ENCODE measurements at regions of chr13 and their contacts with region 1.

Region 1: DNA sequence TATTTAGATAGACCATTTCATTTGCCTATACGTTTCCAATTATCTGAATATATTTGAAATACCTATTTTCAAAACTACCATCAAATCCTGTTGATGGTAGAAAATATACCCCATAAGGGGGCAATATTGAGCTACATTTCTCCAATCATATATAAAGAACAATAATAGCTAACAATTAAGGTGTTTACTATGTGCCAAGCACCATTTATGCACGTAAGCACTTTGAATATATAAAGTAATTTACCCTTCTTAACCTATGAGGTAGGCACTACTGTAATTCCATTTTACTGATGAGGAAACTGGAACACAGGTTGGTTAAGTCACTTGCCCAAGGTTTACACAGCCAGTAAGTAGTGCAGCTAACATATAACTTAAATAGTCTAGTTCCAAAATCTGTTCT is 79.2 kb downstream of the UBL3 start:
- DNase-seq: no peak
- ATAC-seq: peak; percentile 74
- H3K4me3 ChIP-seq: no peak overlapping the region
- H3K27ac ChIP-seq: no peak overlapping the region
- H3K4me1 ChIP-seq: no peaks in the 10 kb centered on the region
- H3K27me3 ChIP-seq: no peaks in the 10 kb centered on the region
- CTCF ChIP-seq: peak in 2 of 3 experiments; percentile 20 to 56; a peak in 4 of 6 replicates
- EP300 ChIP-seq: no peak
- POLR2A ChIP-seq: no peak
- RAD21 ChIP-seq: peak; percentile 68

Region 2: GRCh38 chr13:29713839-29714238 is 57.4 kb before region 1 on chr13:
- CTCF ChIA-PET with region 1: no interaction called
- POLR2A ChIA-PET with region 1: no interaction called
- RAD21 ChIA-PET with region 1: no interaction called
- SMC1A ChIA-PET with region 1: no interaction called
- in situ Hi-C with region 1: no loop called
- intact Hi-C with region 1: no loop called
- DNase-seq: no peak
- ATAC-seq: no peak
- H3K4me3 ChIP-seq: no peak overlapping the region
- H3K27ac ChIP-seq: no peak overlapping the region
- H3K4me1 ChIP-seq: no peaks in the 10 kb centered on the region
- H3K27me3 ChIP-seq: no peaks in the 10 kb centered on the region; a peak in 2 of 4 replicates
- CTCF ChIP-seq: peak; percentile 18 to 69 (median 54); a peak in 5 of 6 replicates
- EP300 ChIP-seq: no peak
- POLR2A ChIP-seq: no peak
- RAD21 ChIP-seq: peak; percentile 45

Region 3: DNA sequence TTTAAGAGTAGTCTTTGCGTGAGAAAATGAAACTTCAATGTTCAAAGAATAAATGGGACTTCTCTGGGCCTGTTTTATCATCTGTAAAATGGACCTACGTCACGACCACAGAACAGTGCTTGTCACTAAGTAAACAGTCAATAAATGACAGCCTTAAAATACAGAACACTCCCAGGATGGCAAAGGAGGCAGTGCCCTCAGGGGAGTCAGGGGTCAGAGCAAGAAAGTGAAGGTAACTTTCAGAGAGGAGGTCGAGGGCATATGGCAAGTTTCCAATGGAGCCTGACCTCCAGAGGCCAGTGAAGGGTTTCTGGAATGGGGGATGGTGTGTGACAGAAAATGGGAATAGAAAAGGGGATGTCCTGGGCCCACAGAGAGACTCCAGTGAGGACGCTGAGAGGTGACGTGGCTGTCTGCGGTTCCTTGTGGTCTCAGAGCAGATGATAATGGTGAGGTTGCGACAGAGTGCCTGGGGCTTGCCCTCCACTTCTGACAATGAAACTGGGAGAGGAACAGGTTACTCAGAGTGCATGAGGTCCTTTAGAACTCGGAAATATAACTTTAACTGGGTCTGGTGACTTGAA is 12.6 kb before region 1 on chr13:
- CTCF ChIA-PET with region 1: interaction called, 30 read pairs
- POLR2A ChIA-PET with region 1: no interaction called
- RAD21 ChIA-PET with region 1: interaction called, 11 read pairs
- SMC1A ChIA-PET with region 1: interaction called, 35 read pairs
- in situ Hi-C with region 1: no loop called
- intact Hi-C with region 1: no loop called
- DNase-seq: peak; percentile 74
- ATAC-seq: peak; percentile 96
- H3K4me3 ChIP-seq: no peak overlapping the region
- H3K27ac ChIP-seq: no peak overlapping the region
- H3K4me1 ChIP-seq: peaks cover 3% of the 10 kb centered on the region; the same call in 1 of the 2 replicates
- H3K27me3 ChIP-seq: no peaks in the 10 kb centered on the region
- CTCF ChIP-seq: no peak
- EP300 ChIP-seq: peak; percentile 67 to 76; a peak in 3 of 4 replicates
- POLR2A ChIP-seq: no peak
- RAD21 ChIP-seq: no peak

Region 4: DNA sequence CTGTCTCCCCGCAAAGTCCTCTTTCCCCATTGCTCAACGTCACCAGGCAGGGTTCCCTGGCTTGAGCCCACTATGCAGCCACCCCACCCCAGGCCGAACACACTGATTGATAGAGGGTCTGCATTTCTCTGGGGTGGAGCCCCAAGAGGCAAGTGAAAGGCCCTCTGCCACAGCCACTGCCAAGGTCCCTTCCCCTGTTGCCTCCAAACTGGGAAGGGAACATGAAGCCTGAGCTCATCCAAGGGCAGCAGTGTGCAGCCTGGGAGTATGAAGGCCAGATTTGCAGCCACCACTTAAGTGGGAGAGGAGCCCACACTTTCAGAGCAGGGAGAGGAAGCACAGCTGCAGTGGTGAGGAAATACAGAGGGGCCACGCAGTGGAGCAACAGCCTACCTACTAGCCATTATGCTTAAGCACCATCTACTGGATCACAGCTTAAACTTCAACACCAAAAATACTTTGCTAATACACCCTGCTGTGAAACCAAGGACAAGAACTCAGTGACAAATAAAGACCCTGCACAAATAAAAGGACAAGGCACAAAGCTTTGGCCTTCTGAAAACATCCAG is 30.6 kb after region 1 on chr13:
- CTCF ChIA-PET with region 1: interaction called, 28 read pairs
- POLR2A ChIA-PET with region 1: no interaction called
- RAD21 ChIA-PET with region 1: interaction called, 5 read pairs
- SMC1A ChIA-PET with region 1: interaction called, 7 read pairs
- in situ Hi-C with region 1: no loop called
- intact Hi-C with region 1: no loop called
- DNase-seq: no peak
- ATAC-seq: 0 out of 3 replicates have a peak, but pooled peaks have one; percentile 16
- H3K4me3 ChIP-seq: no peak overlapping the region
- H3K27ac ChIP-seq: no peak overlapping the region
- H3K4me1 ChIP-seq: peaks cover 3% of the 10 kb centered on the region; the same call in 1 of the 2 replicates
- H3K27me3 ChIP-seq: no peaks in the 10 kb centered on the region
- CTCF ChIP-seq: peak in 2 of 3 experiments; percentile 10 to 22; a peak in 2 of 6 replicates
- EP300 ChIP-seq: no peak
- POLR2A ChIP-seq: no peak
- RAD21 ChIP-seq: peak; percentile 61; the same call in 1 of the 2 replicates

Region 5: GRCh38 chr13:29817604-29818378 is 46.5 kb after region 1 on chr13:
- CTCF ChIA-PET with region 1: interaction called, 9 read pairs
- POLR2A ChIA-PET with region 1: no interaction called
- RAD21 ChIA-PET with region 1: interaction called, 24 read pairs
- SMC1A ChIA-PET with region 1: interaction called, 15 read pairs
- in situ Hi-C with region 1: no loop called
- intact Hi-C with region 1: no loop called
- DNase-seq: peak; percentile 69
- ATAC-seq: peak; percentile 97
- H3K4me3 ChIP-seq: peak overlapping the region; percentile 46; the same call in 1 of the 2 replicates
- H3K27ac ChIP-seq: peak overlapping the region; percentile 87
- H3K4me1 ChIP-seq: peaks cover 23% of the 10 kb centered on the region; the same call in 1 of the 2 replicates
- H3K27me3 ChIP-seq: no peaks in the 10 kb centered on the region
- CTCF ChIP-seq: no peak
- EP300 ChIP-seq: peak; percentile 38 to 54; a peak in 2 of 4 replicates
- POLR2A ChIP-seq: no peak
- RAD21 ChIP-seq: 0 out of 2 replicates have a peak, but pooled peaks have one; percentile 12

Region 6: GRCh38 chr13:29850224-29850898 is 79.1 kb after region 1 on chr13 and contains the start of gene UBL3:
- CTCF ChIA-PET with region 1: interaction called, 112 read pairs
- POLR2A ChIA-PET with region 1: interaction called, 3 read pairs
- RAD21 ChIA-PET with region 1: interaction called, 46 read pairs
- SMC1A ChIA-PET with region 1: interaction called, 155 read pairs
- in situ Hi-C with region 1: loop called (anchors 5 kb)
- intact Hi-C with region 1: loop called (anchors 2 kb)
- DNase-seq: peak; percentile 62
- ATAC-seq: peak; percentile 84
- H3K4me3 ChIP-seq: peak within 1 kb of the TSS; percentile 77
- H3K27ac ChIP-seq: peak within 1 kb of the TSS; percentile 54
- H3K4me1 ChIP-seq: no peaks in the 10 kb centered on the region
- H3K27me3 ChIP-seq: no peaks in the 10 kb centered on the region
- CTCF ChIP-seq: no peak
- EP300 ChIP-seq: no peak
- POLR2A ChIP-seq: peak; percentile 87
- RAD21 ChIP-seq: no peak
- polyA plus RNA-seq, gene UBL3: 5.5 to 6.1 TPM

Region 7: GRCh38 chr13:29935309-29935981 is 164.2 kb after region 1 on chr13:
- CTCF ChIA-PET with region 1: interaction called, 24 read pairs
- POLR2A ChIA-PET with region 1: no interaction called
- RAD21 ChIA-PET with region 1: interaction called, 21 read pairs
- SMC1A ChIA-PET with region 1: interaction called, 23 read pairs
- in situ Hi-C with region 1: no loop called
- intact Hi-C with region 1: loop called (anchors 5 kb)
- DNase-seq: peak; percentile 74
- ATAC-seq: peak; percentile 91
- H3K4me3 ChIP-seq: peak overlapping the region; percentile 50; the same call in 1 of the 2 replicates
- H3K27ac ChIP-seq: no peak overlapping the region
- H3K4me1 ChIP-seq: peaks cover 20% of the 10 kb centered on the region
- H3K27me3 ChIP-seq: no peaks in the 10 kb centered on the region
- CTCF ChIP-seq: no peak
- EP300 ChIP-seq: peak; percentile 74 to 75; a peak in 3 of 4 replicates
- POLR2A ChIP-seq: no peak
- RAD21 ChIP-seq: no peak

Region 8: DNA sequence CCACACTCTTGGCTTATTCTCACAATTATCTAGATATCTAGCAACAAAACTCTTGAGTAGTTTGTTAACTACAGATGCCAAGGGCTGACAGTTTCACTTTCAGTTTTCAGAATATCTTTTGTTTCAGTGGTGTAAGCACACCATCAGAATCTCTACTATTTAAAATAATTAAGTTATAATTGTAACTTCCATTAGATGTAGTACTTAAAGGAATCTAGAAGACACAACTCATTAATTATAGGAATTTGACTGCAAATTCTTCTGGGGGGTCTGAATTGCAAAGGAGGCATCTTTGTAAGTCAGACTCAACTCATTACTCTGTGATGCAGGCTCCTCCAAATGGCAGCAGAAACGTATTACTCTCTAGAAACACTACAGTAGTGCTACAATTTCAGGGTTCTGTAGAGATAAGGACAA is 801.6 kb after region 1 on chr13:
- CTCF ChIA-PET with region 1: no interaction called
- POLR2A ChIA-PET with region 1: no interaction called
- RAD21 ChIA-PET with region 1: no interaction called
- SMC1A ChIA-PET with region 1: no interaction called
- in situ Hi-C with region 1: no loop called
- intact Hi-C with region 1: no loop called
- DNase-seq: peak; percentile 28
- ATAC-seq: peak; percentile 81
- H3K4me3 ChIP-seq: no peak overlapping the region; the same call in 1 of the 2 replicates
- H3K27ac ChIP-seq: no peak overlapping the region
- H3K4me1 ChIP-seq: peaks cover 17% of the 10 kb centered on the region; the same call in 1 of the 2 replicates
- H3K27me3 ChIP-seq: peaks cover 0 to under 1% of the 10 kb centered on the region in 2 experiments; a peak in 1 of 4 replicates
- CTCF ChIP-seq: peak; percentile 5 to 35 (median 31); a peak in 3 of 6 replicates
- EP300 ChIP-seq: no peak
- POLR2A ChIP-seq: no peak
- RAD21 ChIP-seq: peak; percentile 68

Measured in GM12878 (cell line).